Mammary epithelial cell (primary cell): ENCODE measurements at regions of chr11 and their contacts with region 1.

Region 1: DNA sequence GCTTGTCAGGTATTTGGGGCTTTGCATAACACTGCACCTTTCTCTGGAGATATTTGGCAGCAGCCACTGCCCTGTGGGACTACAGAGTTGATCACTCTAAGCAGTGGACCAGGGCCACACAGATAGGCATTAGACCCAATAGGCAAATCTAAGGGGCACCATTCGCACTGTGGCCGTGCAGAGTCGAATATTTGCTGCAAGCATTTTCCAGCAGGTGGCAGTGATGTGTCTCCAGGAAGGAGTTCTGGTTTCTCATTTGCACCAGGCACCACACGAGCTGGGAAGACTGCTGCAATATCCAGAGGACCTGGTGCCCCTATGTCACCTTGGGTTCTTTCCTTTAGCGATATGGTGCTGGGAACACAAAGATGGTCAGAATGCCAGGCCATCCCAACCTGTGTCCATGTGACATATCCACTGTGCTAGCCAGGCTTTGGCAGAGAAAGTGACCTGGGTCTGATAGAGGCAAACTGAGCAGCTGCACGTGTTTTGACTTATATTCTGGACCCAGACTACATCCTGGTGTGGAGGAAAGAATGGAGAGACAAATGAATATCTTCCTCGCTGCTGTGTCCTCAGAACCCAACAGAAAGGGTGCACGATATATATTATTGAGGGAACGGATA is 318.7 kb downstream of the BUD13 start:
- DNase-seq: peak; percentile 17
- H3K4me3 ChIP-seq: no peak overlapping the region
- H3K27ac ChIP-seq: no peak overlapping the region
- H3K4me1 ChIP-seq: no peaks in the 10 kb centered on the region
- H3K27me3 ChIP-seq: no peaks in the 10 kb centered on the region
- CTCF ChIP-seq: peak; percentile 64 to 79

Region 2: GRCh38 chr11:116499396-116500003 is 45.4 kb after region 1 on chr11:
- CTCF ChIA-PET with region 1: interaction called, 3 read pairs
- dilution Hi-C with region 1: no loop called
- in situ Hi-C with region 1: no loop called
- intact Hi-C with region 1: loop called (anchors 1 kb)
- DNase-seq: peak; percentile 33
- H3K4me3 ChIP-seq: no peak overlapping the region
- H3K27ac ChIP-seq: no peak overlapping the region
- H3K4me1 ChIP-seq: no peaks in the 10 kb centered on the region
- H3K27me3 ChIP-seq: peaks cover 10% of the 10 kb centered on the region
- CTCF ChIP-seq: peak; percentile 44 to 62

Region 3: DNA sequence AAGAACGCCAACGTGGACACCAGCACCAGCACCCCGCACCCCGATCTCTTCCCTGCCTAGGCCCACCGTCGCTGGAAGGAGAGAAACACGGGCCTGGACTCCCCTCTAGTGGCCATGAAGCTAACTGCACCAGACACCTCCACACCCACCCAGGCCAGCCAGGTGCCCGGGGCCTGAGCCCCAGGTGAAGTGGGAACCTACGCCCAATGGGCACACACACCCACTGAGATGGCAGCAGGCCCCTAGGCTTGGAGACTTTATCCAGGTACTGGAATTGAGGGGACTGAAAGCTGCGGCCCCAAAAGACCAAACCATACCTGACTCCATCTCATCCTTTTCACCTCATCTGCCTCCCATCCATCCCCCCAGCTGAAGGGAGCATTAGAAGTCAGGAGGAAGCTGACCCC is 237.6 kb after region 1 on chr11:
- CTCF ChIA-PET with region 1: no interaction called
- dilution Hi-C with region 1: no loop called
- in situ Hi-C with region 1: no loop called
- intact Hi-C with region 1: loop called (anchors 1 kb)
- DNase-seq: no peak
- H3K4me3 ChIP-seq: no peak overlapping the region
- H3K27ac ChIP-seq: no peak overlapping the region
- H3K4me1 ChIP-seq: peaks cover 35% of the 10 kb centered on the region
- H3K27me3 ChIP-seq: no peaks in the 10 kb centered on the region
- CTCF ChIP-seq: peak; percentile 65 to 88

Region 4: DNA sequence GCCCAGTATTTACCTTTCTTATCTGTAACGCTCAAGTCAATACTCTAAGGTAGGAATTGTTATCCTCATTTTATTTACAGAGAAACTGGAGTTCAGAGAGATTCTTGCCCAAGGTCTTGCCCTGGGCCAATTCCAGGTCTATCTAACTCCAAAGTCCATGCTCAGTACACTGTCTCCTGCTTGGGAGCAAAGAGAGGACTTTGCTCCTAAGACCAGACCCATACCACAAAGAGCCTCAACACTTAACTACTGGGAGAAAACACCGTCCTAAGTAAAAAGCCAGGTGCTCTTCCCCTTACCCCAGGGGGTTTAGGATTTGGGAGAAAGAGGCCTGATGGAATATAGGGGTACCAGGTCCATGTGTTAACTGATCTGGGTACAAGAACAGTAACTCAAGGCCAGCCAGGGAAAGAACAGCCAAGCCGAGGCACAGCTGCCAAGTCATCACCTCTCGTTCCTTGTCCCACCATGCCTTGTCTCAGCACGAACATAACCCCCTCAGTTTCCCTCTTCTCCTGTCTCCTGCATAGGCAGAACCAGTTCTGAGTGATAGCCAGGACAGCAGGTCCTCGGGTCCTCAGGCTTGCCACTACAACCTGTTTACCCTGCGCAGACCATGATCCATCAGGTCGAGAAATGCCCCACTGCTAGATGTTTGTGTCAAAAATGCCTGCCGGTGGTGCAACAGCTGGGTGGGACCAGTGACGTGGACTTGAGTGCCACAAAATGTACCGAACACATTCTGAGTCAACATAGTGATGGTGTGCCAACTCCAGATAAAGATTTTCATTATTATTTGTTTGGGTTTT is 354.5 kb after region 1 on chr11:
- CTCF ChIA-PET with region 1: no interaction called
- dilution Hi-C with region 1: no loop called
- in situ Hi-C with region 1: no loop called
- intact Hi-C with region 1: no loop called
- DNase-seq: peak; percentile 46
- H3K4me3 ChIP-seq: no peak overlapping the region
- H3K27ac ChIP-seq: peak overlapping the region; percentile 8
- H3K4me1 ChIP-seq: peaks cover 4% of the 10 kb centered on the region
- H3K27me3 ChIP-seq: peaks cover 2% of the 10 kb centered on the region
- CTCF ChIP-seq: no peak